Activated CD8-positive, alpha-beta T cell treated with anti-CD3 and anti-CD28 coated beads, Interleukin-2, amount 10 ng/mL, durations not matched to agents 7 days and 5 days (primary cell): ENCODE measurements at regions of chr18 and their contacts with region 1.

Region 1: DNA sequence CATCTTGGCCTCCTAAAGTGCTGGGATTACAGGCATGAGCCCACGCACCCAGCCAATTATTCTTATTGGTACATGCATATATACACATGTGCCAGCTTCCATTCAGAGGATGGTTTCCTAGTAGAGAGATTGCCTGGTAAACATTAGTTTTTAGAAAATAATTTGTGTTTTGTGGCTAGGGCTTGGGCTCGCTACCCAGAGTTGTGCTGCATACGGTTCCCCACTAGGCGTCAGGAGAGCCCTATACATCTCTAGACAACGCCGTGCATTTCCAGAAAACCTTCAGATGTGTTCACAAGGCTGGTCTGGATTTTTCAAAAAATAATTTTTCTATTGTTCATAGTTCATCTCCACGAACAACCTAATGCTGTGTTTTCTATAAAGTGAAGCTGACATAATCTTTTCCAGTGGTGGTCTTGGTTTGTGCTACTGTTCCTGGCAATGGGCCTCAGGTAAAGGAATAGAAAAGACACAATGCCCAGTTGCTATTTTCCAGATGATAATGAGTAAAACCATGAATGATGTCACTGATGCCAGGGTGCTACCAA is 14.7 kb upstream of the AFG3L2 start:
- DNase-seq: peak; percentile 71
- ATAC-seq: peak; percentile 94
- H3K4me3 Mint-ChIP-seq: no peak overlapping the region
- H3K27ac Mint-ChIP-seq: no peak overlapping the region
- H3K4me1 Mint-ChIP-seq: no peaks in the 10 kb centered on the region
- H3K27me3 Mint-ChIP-seq: peaks cover 5% of the 10 kb centered on the region

Region 2: GRCh38 chr18:12352188-12352587 is 39.5 kb before region 1 on chr18:
- CTCF ChIA-PET with region 1: no interaction called
- POLR2A ChIA-PET with region 1: no interaction called
- DNase-seq: no peak
- ATAC-seq: no peak
- H3K4me3 Mint-ChIP-seq: no peak overlapping the region
- H3K27ac Mint-ChIP-seq: no peak overlapping the region
- H3K4me1 Mint-ChIP-seq: no peaks in the 10 kb centered on the region
- H3K27me3 Mint-ChIP-seq: no peaks in the 10 kb centered on the region

Region 3: DNA sequence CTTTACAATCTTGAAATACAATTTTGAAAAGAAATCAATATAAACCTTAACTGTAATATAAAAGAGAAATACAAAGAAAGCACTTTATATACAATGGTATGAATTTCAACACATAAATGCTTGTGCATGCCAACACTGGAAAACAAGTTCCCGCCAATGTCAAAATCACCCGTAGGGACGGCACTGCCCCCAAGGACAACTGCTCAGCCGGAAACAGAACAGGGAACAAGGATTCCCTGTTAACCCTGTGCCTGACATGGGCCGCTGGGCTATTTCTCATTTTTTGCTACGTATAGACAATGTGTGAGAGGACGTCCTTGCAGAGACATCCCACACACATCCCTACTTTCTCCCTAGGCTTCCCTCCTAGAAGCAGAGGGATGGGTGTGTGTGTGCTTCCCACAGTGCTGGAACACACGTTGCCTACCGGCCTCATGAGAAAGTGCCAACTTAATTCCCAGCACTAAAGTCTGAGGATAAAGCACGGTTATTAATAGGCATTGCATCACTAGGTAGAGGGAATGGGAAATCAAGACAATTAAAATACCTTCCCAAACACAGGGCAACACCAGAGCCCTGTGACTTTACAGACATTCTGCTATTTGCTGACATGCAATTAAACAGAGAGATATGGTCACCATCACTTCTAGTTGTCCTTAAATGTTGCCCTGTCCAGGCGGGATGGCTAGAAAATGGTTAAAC is 29.1 kb before region 1 on chr18:
- CTCF ChIA-PET with region 1: no interaction called
- POLR2A ChIA-PET with region 1: no interaction called
- DNase-seq: no peak
- ATAC-seq: no peak
- H3K4me3 Mint-ChIP-seq: no peak overlapping the region
- H3K27ac Mint-ChIP-seq: no peak overlapping the region
- H3K4me1 Mint-ChIP-seq: peaks cover 2% of the 10 kb centered on the region
- H3K27me3 Mint-ChIP-seq: no peaks in the 10 kb centered on the region

Region 4: DNA sequence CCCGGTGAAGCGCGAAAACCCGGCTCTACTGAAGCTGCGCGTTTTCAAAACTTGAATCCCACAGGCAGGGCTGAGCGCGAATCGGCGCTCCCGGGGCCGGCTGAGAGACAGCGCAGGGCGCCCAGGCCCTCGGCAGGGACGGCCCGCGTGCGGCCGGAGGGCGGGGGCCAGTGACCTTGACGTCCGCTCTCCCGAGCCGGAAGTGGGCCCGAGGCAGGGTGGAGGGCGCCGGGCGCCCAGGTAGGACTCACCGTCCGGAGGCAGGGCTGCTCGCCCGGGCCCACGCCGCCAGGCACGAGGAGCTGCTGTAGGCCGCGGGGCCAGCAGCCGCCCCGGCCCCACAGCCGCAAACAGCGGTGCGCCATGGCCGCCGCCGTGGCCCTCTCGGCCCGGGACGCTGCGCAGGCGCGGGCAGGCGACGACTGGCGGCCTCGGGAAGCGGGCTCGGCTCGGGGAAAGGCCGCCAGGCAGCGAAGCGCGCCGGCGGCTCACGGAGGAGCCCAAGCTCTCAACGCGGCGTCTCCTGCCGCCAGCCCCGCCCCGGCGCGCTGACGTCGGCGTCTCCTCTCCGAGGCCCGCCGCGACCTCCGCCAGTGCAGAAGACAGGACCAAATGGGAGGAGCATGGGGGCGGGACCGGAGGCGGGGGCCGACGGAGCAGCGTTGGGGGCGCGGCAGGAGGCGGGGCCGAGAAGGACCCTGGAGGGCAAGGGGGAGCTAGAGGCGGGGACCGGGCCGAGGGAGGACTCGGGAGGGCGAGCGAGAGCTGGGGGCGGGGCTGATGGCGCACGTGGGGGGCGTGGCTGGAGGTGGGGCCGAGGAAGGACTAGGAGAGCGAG is 14.8 kb before region 1 on chr18 and contains the start of gene AFG3L2:
- CTCF ChIA-PET with region 1: interaction called, 22 read pairs
- POLR2A ChIA-PET with region 1: no interaction called
- DNase-seq: peak; percentile 100
- ATAC-seq: peak; percentile 89
- H3K4me3 Mint-ChIP-seq: peak within 1 kb of the TSS; percentile 93
- H3K27ac Mint-ChIP-seq: peak within 1 kb of the TSS; percentile 96
- H3K4me1 Mint-ChIP-seq: peaks cover 43% of the 10 kb centered on the region
- H3K27me3 Mint-ChIP-seq: no peaks in the 10 kb centered on the region
- total RNA-seq, gene AFG3L2: 40.6 to 44.3 TPM

Region 5: GRCh38 chr18:12408247-12408869 is 16.7 kb after region 1 on chr18:
- CTCF ChIA-PET with region 1: interaction called, 35 read pairs
- POLR2A ChIA-PET with region 1: no interaction called
- DNase-seq: no peak
- ATAC-seq: peak; percentile 4
- H3K4me3 Mint-ChIP-seq: peak overlapping the region; percentile 75
- H3K27ac Mint-ChIP-seq: peak overlapping the region; percentile 30
- H3K4me1 Mint-ChIP-seq: peaks cover 31% of the 10 kb centered on the region
- H3K27me3 Mint-ChIP-seq: peaks cover 32% of the 10 kb centered on the region